Heart right ventricle (tissue), 16 donors: ENCODE measurements at regions of chr13 and their contacts with region 1.

Region 1: GRCh38 chr13:41613984-41614661 is 156.8 kb downstream of the RGCC start:
- DNase-seq: peak; percentile 48 to 77
- ATAC-seq: peak; percentile 90 to 96 (median 93)
- H3K4me3 ChIP-seq: no peak overlapping the region
- H3K27ac ChIP-seq: peak overlapping the region; percentile 28 to 87 (median 72)
- H3K4me1 ChIP-seq: peaks cover 13 to 54% (median 40%) of the 10 kb centered on the region in 9 donors
- H3K27me3 ChIP-seq: no peaks in the 10 kb centered on the region
- CTCF ChIP-seq: no peak

Region 2: DNA sequence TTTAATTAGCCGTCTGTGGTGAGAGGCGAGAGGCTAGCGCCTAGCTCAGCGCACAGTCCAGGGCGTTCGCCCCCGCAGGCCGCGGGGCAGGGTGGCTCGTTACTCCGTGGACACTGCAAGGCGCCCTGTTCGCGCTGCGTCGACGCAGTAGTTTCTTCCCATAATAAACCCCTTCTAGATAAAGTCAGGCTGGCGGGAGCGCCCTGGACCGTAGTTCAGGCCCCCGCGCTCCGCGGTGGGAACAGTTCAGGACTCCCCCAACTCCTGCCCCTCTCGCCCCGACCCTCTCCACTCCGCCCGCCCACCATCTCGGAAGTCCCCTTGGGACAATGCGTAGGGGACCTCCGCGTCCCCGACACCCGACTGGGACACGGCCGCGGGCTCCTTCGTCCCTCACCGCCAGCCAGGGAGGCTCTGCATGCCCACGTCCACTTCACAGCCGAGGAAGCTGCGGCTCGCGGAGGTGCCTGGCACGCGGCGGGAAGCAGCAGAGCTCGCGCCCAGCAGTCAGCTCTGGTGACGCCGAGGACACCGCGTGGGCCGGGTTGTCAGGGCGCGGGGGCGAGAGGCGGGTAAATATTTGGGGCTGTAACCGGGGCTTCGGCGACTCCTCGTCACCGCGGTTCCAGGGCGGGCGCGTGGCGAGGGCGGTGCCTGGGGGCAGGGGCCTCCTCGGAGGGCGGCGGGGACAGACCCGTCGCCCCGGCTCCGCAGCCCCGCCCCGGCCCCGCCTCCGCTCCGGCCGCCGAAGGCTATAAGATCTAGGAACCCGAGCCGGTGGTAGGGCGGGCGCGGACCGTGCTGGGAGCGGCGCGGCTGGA is 157.1 kb before region 1 on chr13 and contains the start of gene RGCC:
- intact Hi-C with region 1: loop called in 3 of 10 experiments (anchors 5 to 10 kb)
- DNase-seq: peak; percentile 80 to 83
- ATAC-seq: peak; percentile 83 to 92 (median 90)
- H3K4me3 ChIP-seq: peak within 1 kb of the TSS; percentile 62 to 91 (median 74)
- H3K27ac ChIP-seq: peak within 1 kb of the TSS; percentile 76 to 91 (median 84)
- H3K4me1 ChIP-seq: peaks cover 0 to 34% (median 19%) of the 10 kb centered on the region in 9 donors
- H3K27me3 ChIP-seq: peaks cover 0 to 33% (median 11%) of the 10 kb centered on the region in 7 donors
- CTCF ChIP-seq: no peak
- total RNA-seq, gene RGCC: 15.6 to 63.2 (median 40.0) TPM

Region 3: DNA sequence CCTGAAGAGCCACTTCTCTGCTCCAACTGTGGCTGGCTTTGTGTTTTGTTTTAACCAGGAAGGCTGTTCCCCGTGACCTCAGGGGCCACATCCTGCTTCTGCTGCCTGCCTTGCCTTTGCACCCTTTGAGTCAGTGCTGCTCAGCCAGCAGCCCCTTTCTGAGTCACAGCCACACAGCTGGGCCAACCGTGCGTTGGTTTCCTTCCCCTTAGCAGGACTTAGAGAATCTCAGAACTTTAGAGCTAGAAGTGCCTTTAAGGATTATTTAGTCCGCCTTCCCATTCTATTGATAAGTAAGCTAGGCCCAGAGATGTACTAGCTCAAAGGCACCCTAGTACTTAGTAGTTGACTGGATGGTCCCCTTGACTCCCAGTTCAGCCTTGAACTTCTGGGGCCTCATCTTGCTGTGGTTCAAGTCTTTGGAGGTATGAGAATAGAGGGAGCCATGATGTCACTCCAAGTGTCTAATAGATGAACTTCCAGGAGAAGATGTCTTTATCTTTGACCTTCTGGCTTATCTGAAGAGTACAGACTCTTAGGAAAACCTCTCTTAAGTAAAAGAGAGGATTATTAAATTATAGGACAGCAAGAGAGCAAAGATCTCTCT is 148.8 kb before region 1 on chr13:
- intact Hi-C with region 1: loop called in 1 of 10 experiments (anchors 10 kb)
- DNase-seq: peak; percentile 51 to 66
- ATAC-seq: peak; percentile 44 to 88 (median 78)
- H3K4me3 ChIP-seq: peak overlapping the region in 1 of 10 donors; percentile 62
- H3K27ac ChIP-seq: peak overlapping the region in 9 of 10 donors; percentile 28 to 86 (median 71)
- H3K4me1 ChIP-seq: peaks cover 3 to 67% (median 31%) of the 10 kb centered on the region in 9 donors
- H3K27me3 ChIP-seq: peaks cover 0 to 4% (median 0%) of the 10 kb centered on the region in 7 donors
- CTCF ChIP-seq: no peak

Region 4: GRCh38 chr13:41492404-41493260 is 121.5 kb before region 1 on chr13:
- intact Hi-C with region 1: loop called in 2 of 10 experiments (anchors 2 to 10 kb)
- DNase-seq: no peak
- ATAC-seq: peak in 2 of 8 donors; percentile 3 to 22
- H3K4me3 ChIP-seq: no peak overlapping the region
- H3K27ac ChIP-seq: peak overlapping the region in 7 of 10 donors; percentile 30 to 86 (median 68)
- H3K4me1 ChIP-seq: peaks cover 14 to 59% (median 43%) of the 10 kb centered on the region in 9 donors
- H3K27me3 ChIP-seq: no peaks in the 10 kb centered on the region
- CTCF ChIP-seq: no peak

Region 5: GRCh38 chr13:41562083-41562482 is 52.0 kb before region 1 on chr13:
- intact Hi-C with region 1: loop called in 1 of 10 experiments (anchors 5 kb)
- DNase-seq: peak; percentile 60 to 68
- ATAC-seq: peak; percentile 52 to 89 (median 71)
- H3K4me3 ChIP-seq: no peak overlapping the region
- H3K27ac ChIP-seq: peak overlapping the region in 2 of 10 donors; percentile 18 to 54
- H3K4me1 ChIP-seq: peaks cover 3 to 49% (median 35%) of the 10 kb centered on the region in 9 donors
- H3K27me3 ChIP-seq: no peaks in the 10 kb centered on the region
- CTCF ChIP-seq: no peak